Dorsolateral prefrontal cortex (tissue), 120 donors: ENCODE measurements at regions of chr3 and their contacts with region 1.

Region 1: DNA sequence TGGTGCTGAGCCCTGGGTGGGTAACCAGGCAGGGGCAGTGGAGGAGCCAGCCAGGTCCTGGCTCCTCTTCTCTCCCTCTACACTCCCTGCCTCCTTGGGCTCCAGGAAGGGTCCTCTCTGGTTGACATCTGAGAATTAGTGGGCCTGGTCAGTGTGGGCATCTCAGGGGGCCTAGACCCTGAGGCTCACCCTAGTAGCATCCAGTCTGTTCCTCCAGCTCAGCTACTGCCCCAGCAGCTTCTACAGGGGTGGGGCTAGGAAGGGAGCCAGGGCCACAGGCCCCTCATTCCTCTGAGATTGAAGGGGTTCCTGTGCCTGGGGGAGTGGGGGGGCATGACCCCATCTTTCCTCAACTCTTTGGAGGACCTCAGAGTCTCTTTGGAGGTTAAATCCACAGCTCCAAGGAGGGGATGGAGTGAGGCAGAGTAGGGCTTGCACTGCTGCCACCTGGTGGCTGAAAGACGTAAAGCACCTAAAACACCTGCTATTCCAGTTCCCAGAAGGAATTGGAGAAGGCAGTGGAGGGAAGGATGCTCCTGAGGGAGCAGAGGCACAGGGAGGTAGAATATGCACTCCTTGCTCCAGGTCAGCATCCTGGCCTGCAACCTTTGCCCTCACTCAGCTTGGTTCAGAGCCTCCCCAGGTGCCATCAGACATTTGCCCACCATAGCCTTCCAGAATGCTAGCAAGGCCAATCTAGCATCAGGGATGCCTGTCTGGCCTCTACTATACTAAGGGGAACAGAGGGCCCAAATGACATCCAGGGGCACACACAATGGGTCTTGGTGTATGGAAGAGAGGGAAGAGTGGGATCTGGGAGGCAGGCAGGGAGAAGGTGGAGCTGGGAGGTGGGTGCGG is 25.1 kb downstream of the C3orf18 start:
- DNase-seq: peak; percentile 59 to 85 (median 78)
- H3K4me3 ChIP-seq: no peak overlapping the region
- H3K27ac ChIP-seq: no peak overlapping the region
- H3K27me3 ChIP-seq: peaks cover 0 to 6% (median 0%) of the 10 kb centered on the region in 45 donors
- CTCF ChIP-seq: peak; percentile 76 to 96 (median 90)

Region 2: GRCh38 chr3:50170689-50171088 is 371.7 kb before region 1 on chr3:
- intact Hi-C with region 1: no loop called
- DNase-seq: no peak
- H3K4me3 ChIP-seq: no peak overlapping the region
- H3K27ac ChIP-seq: peak overlapping the region in 35 of 59 donors; percentile 9 to 83 (median 59)
- H3K27me3 ChIP-seq: no peaks in the 10 kb centered on the region
- CTCF ChIP-seq: no peak

Region 3: DNA sequence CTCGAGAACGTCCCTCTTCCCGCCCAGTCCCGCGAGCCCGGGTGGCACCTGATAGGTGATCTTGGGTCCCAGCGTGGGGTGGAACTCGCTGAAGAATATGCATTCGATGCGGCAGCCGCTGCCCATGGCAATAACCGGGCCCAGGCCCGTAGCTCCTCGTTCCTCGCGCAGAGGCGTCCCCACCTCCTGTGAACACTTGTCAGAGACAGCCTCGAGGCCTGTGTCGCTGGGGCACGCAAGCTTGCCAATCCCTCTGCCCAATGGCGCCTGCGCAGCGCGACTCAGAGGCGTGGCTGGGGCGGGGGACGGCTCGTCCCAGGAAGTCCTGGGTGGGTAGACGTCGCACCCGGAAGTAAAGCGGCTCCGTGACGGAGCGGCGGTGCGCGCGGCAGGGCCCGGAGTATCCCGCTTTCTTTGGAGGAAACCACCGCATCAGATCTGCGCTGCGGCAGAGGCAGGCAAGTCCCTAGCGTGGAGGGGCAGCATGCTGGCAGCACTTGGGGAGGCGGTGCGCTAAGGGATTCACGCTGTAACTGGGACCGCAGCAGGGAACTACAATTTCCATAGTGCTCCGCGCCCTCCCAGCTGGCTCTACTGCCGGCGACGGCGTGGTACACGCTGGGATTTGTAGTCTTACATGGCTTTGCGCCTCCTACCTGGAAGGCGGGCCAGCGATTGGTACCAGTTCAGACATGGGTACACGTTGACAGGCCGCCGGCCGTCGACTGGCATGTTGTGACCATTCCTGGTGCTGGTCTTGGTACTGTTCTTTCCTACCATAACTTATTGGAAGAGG is 191.7 kb before region 1 on chr3 and contains the starts of genes CYB561D2 and NPRL2:
- intact Hi-C with region 1: loop called (anchors 5 kb)
- DNase-seq: peak; percentile 98 to 100 (median 98)
- H3K4me3 ChIP-seq: peak within 1 kb of the TSS; percentile 64 to 100 (median 86)
- H3K27ac ChIP-seq: peak within 1 kb of the TSS; percentile 90 to 100 (median 97)
- H3K27me3 ChIP-seq: no peaks in the 10 kb centered on the region
- CTCF ChIP-seq: peak in 34 of 56 donors; percentile 4 to 56 (median 24)
- total RNA-seq, gene CYB561D2: 7.6 to 20.0 (median 13.4) TPM
- total RNA-seq, gene NPRL2: 24.6 to 51.7 (median 35.3) TPM

Region 4: DNA sequence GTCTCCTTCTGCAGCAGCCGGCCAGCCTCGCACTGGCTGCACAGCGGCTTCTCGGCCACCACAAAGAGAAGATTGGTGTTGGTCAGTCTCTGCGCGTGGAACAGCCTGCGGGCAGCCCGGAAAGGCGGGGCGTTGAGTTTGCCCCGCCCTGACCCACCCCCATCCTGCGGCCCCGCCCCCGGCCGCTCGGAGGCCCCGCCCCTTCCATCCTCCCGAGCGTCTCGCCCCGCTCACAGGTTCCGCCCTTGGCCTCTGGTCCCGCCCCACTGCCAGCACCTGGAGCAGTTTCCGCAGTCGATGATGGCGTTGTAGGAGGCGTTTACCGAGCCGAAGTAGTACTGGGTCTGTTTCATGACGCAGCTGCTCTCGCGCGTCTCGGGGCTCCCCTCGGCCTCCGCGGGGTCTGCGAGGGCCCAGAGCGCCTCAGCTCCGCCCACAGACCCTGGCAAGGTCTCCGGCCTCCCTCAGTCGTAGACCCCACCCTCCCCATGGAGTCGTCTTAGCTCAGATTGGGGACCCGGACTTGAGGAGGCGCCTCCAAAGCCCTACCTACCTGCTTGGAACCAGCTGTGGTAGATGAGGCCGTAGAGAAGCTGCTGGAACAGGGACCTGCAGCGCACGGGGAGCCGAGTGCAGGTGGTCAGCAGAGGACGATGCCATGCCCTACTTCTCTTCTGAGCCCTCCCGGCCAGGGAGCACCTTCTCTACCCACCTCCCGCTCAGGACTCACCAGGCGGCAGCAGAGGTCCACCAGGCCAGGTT is 177.1 kb before region 1 on chr3:
- intact Hi-C with region 1: loop called (anchors 5 kb)
- DNase-seq: peak; percentile 36 to 84 (median 69)
- H3K4me3 ChIP-seq: peak overlapping the region; percentile 39 to 75 (median 58)
- H3K27ac ChIP-seq: peak overlapping the region in 27 of 59 donors; percentile 6 to 78 (median 45)
- H3K27me3 ChIP-seq: no peaks in the 10 kb centered on the region
- CTCF ChIP-seq: peak in 3 of 56 donors; percentile 12 to 16 (median 16)

Region 5: DNA sequence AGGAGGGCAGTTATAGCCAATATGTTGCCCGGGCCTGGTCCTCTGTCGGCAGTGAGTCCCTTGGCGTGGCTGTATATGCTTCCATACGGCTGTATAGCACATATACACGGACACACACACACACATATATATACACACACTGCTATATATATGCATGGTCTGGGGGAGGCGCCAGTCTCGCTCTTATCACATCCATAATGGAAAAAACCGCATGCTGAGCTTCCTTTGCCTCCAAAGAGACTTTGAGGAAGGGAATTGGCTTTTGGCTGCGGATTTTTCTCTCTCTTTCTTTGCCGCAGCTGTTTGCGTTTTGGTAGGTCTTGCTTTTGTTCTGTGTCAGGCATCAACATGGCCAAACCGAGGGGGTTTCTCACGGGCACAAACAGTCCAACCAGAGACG is 171.8 kb before region 1 on chr3:
- intact Hi-C with region 1: loop called (anchors 5 kb)
- DNase-seq: peak in 4 of 10 donors; percentile 48 to 80 (median 72)
- H3K4me3 ChIP-seq: no peak overlapping the region
- H3K27ac ChIP-seq: peak overlapping the region in 55 of 59 donors; percentile 8 to 88 (median 76)
- H3K27me3 ChIP-seq: no peaks in the 10 kb centered on the region
- CTCF ChIP-seq: peak in 13 of 56 donors; percentile 7 to 37 (median 19)

Region 6: DNA sequence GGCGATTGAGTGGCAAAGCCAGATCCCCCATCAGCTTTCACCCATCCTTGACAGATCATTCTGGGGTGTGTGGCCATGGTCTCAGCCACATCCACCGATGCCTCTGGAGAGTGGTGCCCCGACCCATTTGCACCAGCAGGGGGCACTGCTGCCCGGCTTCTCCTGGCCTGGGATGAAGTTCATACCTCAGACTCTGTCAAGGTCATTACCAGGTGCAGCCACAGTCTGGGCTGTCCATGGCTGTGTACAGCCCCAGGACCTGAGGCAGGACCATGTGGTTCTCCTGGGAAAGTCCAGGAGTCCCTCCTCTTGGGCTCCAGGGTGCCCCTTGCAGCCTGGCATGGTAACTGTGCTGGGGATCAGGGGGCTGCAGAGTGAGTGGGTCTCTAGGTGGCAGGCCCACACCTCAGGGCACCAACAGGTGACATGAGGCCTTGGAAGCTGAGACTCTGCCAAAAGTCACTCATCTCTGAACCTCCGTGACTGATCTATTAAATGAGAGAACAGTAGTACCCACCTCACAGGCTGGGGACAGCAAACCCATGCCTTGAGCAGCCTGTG is 106.2 kb before region 1 on chr3:
- intact Hi-C with region 1: loop called (anchors 2 kb)
- DNase-seq: peak in 8 of 10 donors; percentile 36 to 78 (median 58)
- H3K4me3 ChIP-seq: no peak overlapping the region
- H3K27ac ChIP-seq: no peak overlapping the region
- H3K27me3 ChIP-seq: no peaks in the 10 kb centered on the region
- CTCF ChIP-seq: peak; percentile 46 to 91 (median 79)